K562 (cell line): ENCODE measurements at regions of chr2 and their contacts with region 1.

Region 1: GRCh38 chr2:142989273-142990204 is 112.1 kb downstream of the KYNU start:
- DNase-seq: peak in 2 of 4 experiments; percentile 7 to 13
- ATAC-seq: no peak
- H3K4me3 ChIP-seq: no peak overlapping the region
- H3K27ac ChIP-seq: no peak overlapping the region
- H3K4me1 ChIP-seq: no peaks in the 10 kb centered on the region
- H3K27me3 ChIP-seq: no peaks in the 10 kb centered on the region
- CTCF ChIP-seq: peak in 1 of 3 experiments; percentile 39; a peak in 2 of 6 replicates
- EP300 ChIP-seq: no peak
- POLR2A ChIP-seq: no peak
- RAD21 ChIP-seq: peak; percentile 45 to 74

Region 2: DNA sequence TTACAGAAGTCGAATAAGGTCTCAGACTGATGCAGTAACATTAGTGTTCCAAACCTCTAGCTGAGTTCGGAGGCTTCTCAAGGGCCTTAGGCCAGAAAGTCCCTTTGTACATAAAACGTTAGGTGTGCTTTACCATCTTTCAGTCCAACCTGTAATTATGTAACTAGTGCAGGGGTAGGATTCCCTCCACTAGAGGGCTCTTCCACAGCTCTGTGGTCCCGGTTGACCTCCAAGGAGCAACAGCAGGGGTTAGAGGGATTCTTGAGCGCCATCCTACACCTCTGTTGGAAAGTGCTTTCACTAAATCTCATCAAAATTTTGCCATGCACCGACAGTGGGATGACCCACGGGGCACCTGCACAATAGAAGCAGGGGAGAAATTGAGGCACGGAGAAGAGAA is 702.9 kb before region 1 on chr2:
- CTCF ChIA-PET with region 1: no interaction called
- POLR2A ChIA-PET with region 1: no interaction called
- in situ Hi-C with region 1: no loop called
- intact Hi-C with region 1: loop called (anchors 10 kb)
- DNase-seq: peak in 2 of 4 experiments; percentile 3 to 5
- ATAC-seq: no peak
- H3K4me3 ChIP-seq: no peak overlapping the region
- H3K27ac ChIP-seq: no peak overlapping the region
- H3K4me1 ChIP-seq: no peaks in the 10 kb centered on the region
- H3K27me3 ChIP-seq: no peaks in the 10 kb centered on the region
- CTCF ChIP-seq: no peak
- EP300 ChIP-seq: no peak
- POLR2A ChIP-seq: no peak
- RAD21 ChIP-seq: no peak

Region 3: GRCh38 chr2:142682528-142682927 is 307.0 kb before region 1 on chr2:
- CTCF ChIA-PET with region 1: no interaction called
- POLR2A ChIA-PET with region 1: no interaction called
- in situ Hi-C with region 1: loop called (anchors 25 kb)
- intact Hi-C with region 1: loop called (anchors 2 kb)
- DNase-seq: no peak
- ATAC-seq: no peak
- H3K4me3 ChIP-seq: no peak overlapping the region
- H3K27ac ChIP-seq: no peak overlapping the region
- H3K4me1 ChIP-seq: no peaks in the 10 kb centered on the region
- H3K27me3 ChIP-seq: no peaks in the 10 kb centered on the region
- CTCF ChIP-seq: peak in 1 of 3 experiments; percentile 5; a peak in 1 of 6 replicates
- EP300 ChIP-seq: no peak
- POLR2A ChIP-seq: no peak
- RAD21 ChIP-seq: peak; percentile 23 to 56; a peak in 2 of 4 replicates

Region 4: GRCh38 chr2:144020047-144020446 is 1030.5 kb after region 1 on chr2:
- CTCF ChIA-PET with region 1: no interaction called
- POLR2A ChIA-PET with region 1: no interaction called
- in situ Hi-C with region 1: no loop called
- intact Hi-C with region 1: no loop called
- DNase-seq: peak in 1 of 4 experiments; percentile 37
- ATAC-seq: peak; percentile 83
- H3K4me3 ChIP-seq: no peak overlapping the region
- H3K27ac ChIP-seq: peak overlapping the region; percentile 18; the same call in 1 of the 3 replicates
- H3K4me1 ChIP-seq: peaks cover 0 to 3% of the 10 kb centered on the region in 2 experiments; a peak in 2 of 5 replicates
- H3K27me3 ChIP-seq: no peaks in the 10 kb centered on the region
- CTCF ChIP-seq: no peak
- EP300 ChIP-seq: no peak
- POLR2A ChIP-seq: no peak; the same call in 1 of the 2 replicates
- RAD21 ChIP-seq: no peak